ENCODE measurements at regions of chr5 and their contacts with region 1.

Region 1: DNA sequence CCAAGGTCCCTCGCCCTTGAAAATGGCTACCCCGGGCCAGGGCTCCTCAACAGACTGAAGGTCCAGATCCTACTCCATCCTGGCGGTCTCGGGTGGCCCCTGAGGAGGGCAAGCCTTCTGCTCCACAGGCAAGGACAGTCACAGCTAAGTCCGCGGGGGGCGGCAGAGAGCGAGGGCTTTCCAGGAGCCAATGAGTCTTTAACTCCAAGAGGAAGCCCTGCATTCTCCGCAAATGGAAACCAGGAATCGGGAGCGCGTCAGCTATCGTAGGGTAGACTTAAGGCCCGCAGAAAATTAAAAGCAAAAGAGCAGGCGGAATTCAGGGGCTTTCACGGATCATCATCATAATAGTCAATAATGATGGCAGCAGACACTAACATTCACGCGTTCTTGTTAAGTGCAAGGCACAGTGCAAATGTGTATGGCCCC is 87.8 kb upstream of the TNFAIP8 start:
- DNase-seq: peak; percentile 91
- ATAC-seq: peak; percentile 93
- H3K4me3 ChIP-seq: peak overlapping the region; percentile 76 to 96 (median 87)
- H3K27ac ChIP-seq: peak overlapping the region; percentile 78
- H3K4me1 ChIP-seq: peaks cover 34% of the 10 kb centered on the region
- H3K27me3 ChIP-seq: no peaks in the 10 kb centered on the region; a peak in 1 of 5 replicates
- CTCF ChIP-seq: no peak
- EP300 ChIP-seq: no peak
- POLR2A ChIP-seq: no peak
- RAD21 ChIP-seq: no peak

Region 2: GRCh38 chr5:118705959-118706667 is 561.9 kb before region 1 on chr5:
- CTCF ChIA-PET with region 1: no interaction called
- POLR2A ChIA-PET with region 1: no interaction called
- in situ Hi-C with region 1: no loop called
- intact Hi-C with region 1: no loop called
- DNase-seq: no peak
- ATAC-seq: no peak
- H3K4me3 ChIP-seq: no peak overlapping the region
- H3K27ac ChIP-seq: no peak overlapping the region
- H3K4me1 ChIP-seq: no peaks in the 10 kb centered on the region
- H3K27me3 ChIP-seq: no peaks in the 10 kb centered on the region
- CTCF ChIP-seq: no peak
- EP300 ChIP-seq: no peak
- POLR2A ChIP-seq: no peak
- RAD21 ChIP-seq: no peak

Region 3: DNA sequence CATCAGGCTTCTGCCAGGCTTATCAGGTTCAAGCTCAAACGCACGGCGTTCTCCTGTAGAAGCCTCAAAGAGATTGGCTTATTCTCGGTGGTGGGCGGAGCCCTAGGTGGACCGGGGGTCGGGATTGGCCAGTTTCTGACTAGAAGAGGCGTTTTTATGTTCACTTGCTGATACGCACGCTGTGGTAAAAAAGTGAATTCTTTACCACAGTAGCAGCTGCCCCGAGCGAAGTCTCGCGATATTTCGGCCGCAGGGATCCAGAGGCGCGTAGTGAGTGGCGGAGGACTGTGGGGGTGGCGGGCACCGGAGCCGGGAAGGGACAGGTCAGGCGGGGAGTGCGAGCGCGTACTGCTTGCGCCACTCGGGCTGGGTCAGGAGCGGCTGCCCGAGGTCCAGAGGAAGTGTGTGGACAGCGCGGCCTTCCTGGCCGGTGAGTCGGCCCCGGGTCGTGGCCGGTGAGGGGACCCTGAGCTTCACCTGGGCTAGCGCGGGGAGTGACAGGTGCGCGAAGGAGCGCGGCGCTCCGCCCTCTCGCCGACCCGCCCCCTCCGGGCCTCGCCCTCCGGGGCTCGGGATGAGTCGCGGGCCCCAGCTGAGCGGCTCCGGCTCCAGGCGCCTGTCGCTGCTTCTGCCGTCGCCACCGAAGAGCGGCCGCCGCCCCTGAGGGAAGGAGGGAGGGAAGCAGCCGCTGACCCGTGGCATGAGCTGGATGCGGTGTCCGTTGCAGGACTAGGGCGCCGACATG is 197.0 kb before region 1 on chr5 and contains the start of gene DMXL1:
- CTCF ChIA-PET with region 1: no interaction called
- POLR2A ChIA-PET with region 1: interaction called, 22 read pairs
- in situ Hi-C with region 1: no loop called
- intact Hi-C with region 1: no loop called
- DNase-seq: peak; percentile 98
- ATAC-seq: peak; percentile 91
- H3K4me3 ChIP-seq: peak within 1 kb of the TSS; percentile 91 to 93 (median 92)
- H3K27ac ChIP-seq: peak within 1 kb of the TSS; percentile 93
- H3K4me1 ChIP-seq: peaks cover 37% of the 10 kb centered on the region
- H3K27me3 ChIP-seq: no peaks in the 10 kb centered on the region; a peak in 1 of 5 replicates
- CTCF ChIP-seq: no peak; the same call in 1 of the 2 replicates
- EP300 ChIP-seq: no peak
- POLR2A ChIP-seq: peak; percentile 82
- RAD21 ChIP-seq: peak; percentile 53; the same call in 1 of the 2 replicates
- total RNA-seq, gene DMXL1: 18.6 and 22.9 TPM in 2 replicates

Region 4: DNA sequence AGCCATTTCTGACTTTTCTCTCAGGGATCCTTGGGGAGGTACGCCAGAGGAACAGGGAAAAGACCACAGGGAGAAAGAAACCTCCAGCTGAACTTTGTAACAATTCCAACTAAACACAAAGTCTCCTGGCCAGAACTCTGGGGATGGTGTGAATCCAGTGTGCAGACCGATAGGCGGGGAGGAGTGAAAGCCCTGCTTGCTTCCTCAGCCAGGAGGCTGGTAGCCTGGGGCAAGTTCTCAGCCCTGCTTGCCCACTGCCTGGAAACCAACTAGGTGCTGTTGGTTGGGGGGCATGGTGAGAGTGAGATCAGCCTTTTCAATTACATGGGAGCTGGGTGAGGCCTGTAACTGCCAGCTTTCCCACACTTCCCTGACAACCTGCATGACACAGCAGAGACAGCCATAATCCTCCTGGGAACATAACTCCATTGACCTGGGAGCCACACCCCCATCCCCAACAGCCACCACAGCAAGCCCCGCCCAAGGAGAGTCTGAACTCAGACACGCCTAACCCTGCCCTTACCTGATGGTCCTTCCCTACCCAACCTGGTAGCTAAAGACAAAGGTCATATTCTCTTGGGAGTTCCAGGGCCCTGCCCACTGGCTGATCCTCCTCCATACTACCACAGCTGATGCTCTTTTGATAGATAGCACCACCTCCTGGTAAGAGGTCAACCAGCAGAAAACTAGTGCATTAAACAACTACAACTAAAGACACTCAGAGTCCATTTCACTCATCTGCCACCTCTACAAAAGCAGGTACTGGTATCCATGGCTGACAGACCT is 12.2 kb before region 1 on chr5:
- CTCF ChIA-PET with region 1: no interaction called
- POLR2A ChIA-PET with region 1: interaction called, 12 read pairs
- in situ Hi-C with region 1: no loop called
- intact Hi-C with region 1: no loop called
- DNase-seq: peak; percentile 74
- ATAC-seq: peak; percentile 95
- H3K4me3 ChIP-seq: 0 out of 6 replicates have a peak overlapping the region, but pooled peaks of 1 of the 3 experiments have one; percentile 12
- H3K27ac ChIP-seq: peak overlapping the region; percentile 35
- H3K4me1 ChIP-seq: peaks cover 16% of the 10 kb centered on the region
- H3K27me3 ChIP-seq: no peaks in the 10 kb centered on the region
- CTCF ChIP-seq: peak; percentile 77
- EP300 ChIP-seq: no peak
- POLR2A ChIP-seq: no peak
- RAD21 ChIP-seq: peak; percentile 60; the same call in 1 of the 2 replicates

Region 5: GRCh38 chr5:119290161-119290569 is 22.2 kb after region 1 on chr5:
- CTCF ChIA-PET with region 1: no interaction called
- POLR2A ChIA-PET with region 1: interaction called, 11 read pairs
- in situ Hi-C with region 1: no loop called
- intact Hi-C with region 1: loop called (anchors 2 kb)
- DNase-seq: no peak
- ATAC-seq: no peak
- H3K4me3 ChIP-seq: no peak overlapping the region
- H3K27ac ChIP-seq: no peak overlapping the region
- H3K4me1 ChIP-seq: 0 out of 2 replicates have a peak, but pooled peaks cover 6% of the 10 kb centered on the region
- H3K27me3 ChIP-seq: no peaks in the 10 kb centered on the region
- CTCF ChIP-seq: no peak
- EP300 ChIP-seq: no peak
- POLR2A ChIP-seq: no peak
- RAD21 ChIP-seq: no peak

Region 6: GRCh38 chr5:119302916-119303897 is 35.2 kb after region 1 on chr5:
- CTCF ChIA-PET with region 1: interaction called, 3 read pairs
- POLR2A ChIA-PET with region 1: interaction called, 44 read pairs
- in situ Hi-C with region 1: no loop called
- intact Hi-C with region 1: loop called (anchors 1 kb)
- DNase-seq: peak; percentile 97
- ATAC-seq: peak; percentile 98
- H3K4me3 ChIP-seq: peak overlapping the region in 2 of 3 experiments; percentile 1 to 5; a peak in 3 of 6 replicates
- H3K27ac ChIP-seq: peak overlapping the region; percentile 60
- H3K4me1 ChIP-seq: peaks cover 57% of the 10 kb centered on the region
- H3K27me3 ChIP-seq: no peaks in the 10 kb centered on the region
- CTCF ChIP-seq: peak; percentile 35; the same call in 1 of the 2 replicates
- EP300 ChIP-seq: peak in 1 of 2 experiments; percentile 70; a peak in 2 of 4 replicates
- POLR2A ChIP-seq: peak in 1 of 2 experiments; percentile 67; a peak in 1 of 4 replicates
- RAD21 ChIP-seq: no peak

Region 7: DNA sequence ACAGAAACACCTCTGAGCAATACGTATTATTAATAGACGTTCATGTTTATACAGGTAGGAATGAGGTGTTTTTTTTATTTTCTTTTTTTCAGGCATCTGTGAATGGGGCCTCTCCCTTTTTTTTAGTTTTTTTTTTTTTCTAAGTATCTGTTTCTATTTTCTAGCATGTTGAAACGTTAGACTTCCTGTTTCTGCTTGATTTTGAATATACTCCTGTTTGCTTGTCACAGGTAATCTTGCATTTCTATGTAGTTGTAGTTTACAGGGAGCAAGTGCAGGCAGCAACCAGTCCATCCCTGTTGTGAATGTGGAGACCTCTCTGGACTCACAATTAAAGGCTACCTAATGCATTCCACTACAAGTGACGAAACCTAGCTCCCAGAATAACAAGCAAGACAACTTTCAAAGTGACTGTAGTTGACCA is 65.0 kb after region 1 on chr5:
- CTCF ChIA-PET with region 1: no interaction called
- POLR2A ChIA-PET with region 1: no interaction called
- in situ Hi-C with region 1: no loop called
- intact Hi-C with region 1: no loop called
- DNase-seq: no peak
- ATAC-seq: no peak
- H3K4me3 ChIP-seq: no peak overlapping the region
- H3K27ac ChIP-seq: no peak overlapping the region
- H3K4me1 ChIP-seq: peaks cover 12% of the 10 kb centered on the region
- H3K27me3 ChIP-seq: no peaks in the 10 kb centered on the region
- CTCF ChIP-seq: no peak
- EP300 ChIP-seq: no peak
- POLR2A ChIP-seq: no peak
- RAD21 ChIP-seq: no peak

Measured in HepG2 (cell line).